ENCODE measurements at regions of chr18 and their contacts with region 1.

Region 1: GRCh38 chr18:77124452-77124922 is 8.1 kb downstream of the MBP start:
- DNase-seq: peak; percentile 86
- ATAC-seq: peak; percentile 85
- H3K4me3 Mint-ChIP-seq: peak overlapping the region; percentile 69
- H3K27ac Mint-ChIP-seq: peak overlapping the region; percentile 79
- H3K4me1 Mint-ChIP-seq: peaks cover 86% of the 10 kb centered on the region
- H3K27me3 Mint-ChIP-seq: no peaks in the 10 kb centered on the region

Region 2: DNA sequence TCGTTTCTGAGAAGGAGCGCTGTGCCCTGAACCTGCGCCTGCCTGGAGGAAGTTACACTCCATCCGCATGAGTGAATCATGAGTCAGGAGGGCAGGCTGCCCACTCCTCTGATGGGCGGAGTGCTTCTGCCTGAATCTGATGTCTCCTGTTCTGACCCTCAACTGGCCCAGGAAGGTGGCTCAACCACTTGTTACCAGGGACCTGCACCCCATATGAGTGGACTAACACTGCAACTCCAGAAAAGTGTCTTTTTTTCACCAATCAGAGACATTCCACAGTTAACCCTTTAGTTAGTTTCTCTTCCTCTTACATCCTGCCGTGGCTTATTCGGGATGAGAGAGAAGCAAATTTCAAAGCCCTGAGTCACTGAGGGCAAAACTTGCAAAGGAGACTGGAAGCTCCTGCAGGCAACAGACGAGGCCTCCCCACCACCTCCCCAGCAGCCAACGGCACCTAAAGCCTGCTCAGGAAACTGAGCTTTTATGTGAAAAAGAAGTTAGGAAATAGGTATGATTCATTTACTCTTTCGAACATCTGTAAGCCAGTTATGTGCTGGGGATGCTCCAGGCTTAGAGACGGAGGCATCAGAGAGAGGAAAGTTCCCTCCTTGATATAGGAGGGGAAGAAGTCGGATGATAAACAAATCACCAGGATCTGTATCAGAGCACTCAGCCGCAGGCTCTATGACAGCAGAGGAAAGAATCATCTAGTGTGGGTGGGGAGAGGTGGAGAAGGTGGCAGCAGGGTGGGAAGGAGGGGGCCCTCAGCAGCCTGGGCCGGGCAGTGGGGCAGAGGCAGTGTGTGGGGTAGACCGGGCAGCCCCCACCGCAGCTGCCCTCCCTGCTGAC is 22.9 kb before region 1 on chr18:
- CTCF ChIA-PET with region 1: interaction called, 12 read pairs
- DNase-seq: peak; percentile 74
- ATAC-seq: peak; percentile 45
- H3K4me3 Mint-ChIP-seq: peak overlapping the region; percentile 70
- H3K27ac Mint-ChIP-seq: peak overlapping the region; percentile 98
- H3K4me1 Mint-ChIP-seq: peaks cover 95% of the 10 kb centered on the region
- H3K27me3 Mint-ChIP-seq: no peaks in the 10 kb centered on the region

Region 3: DNA sequence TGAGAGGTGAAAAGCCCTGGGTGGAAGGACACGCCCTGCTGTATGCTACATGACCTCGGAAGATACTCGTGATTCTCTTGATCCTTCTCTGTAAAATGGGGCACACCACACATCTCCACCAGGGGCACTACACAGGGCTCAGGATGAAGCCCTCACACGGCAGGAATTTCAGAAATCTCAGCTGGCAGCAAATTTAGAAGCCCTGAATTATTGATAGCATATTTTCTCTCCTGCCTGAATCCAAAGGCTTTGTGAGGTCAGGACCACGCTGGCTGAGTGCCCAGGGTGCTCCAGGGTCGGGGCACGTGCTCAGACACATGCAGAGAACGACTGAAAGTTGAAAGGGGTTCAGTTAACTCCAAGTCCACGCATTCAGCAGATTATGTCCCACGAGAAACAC is 83.1 kb after region 1 on chr18:
- CTCF ChIA-PET with region 1: interaction called, 12 read pairs
- DNase-seq: peak; percentile 56
- ATAC-seq: peak; percentile 50
- H3K4me3 Mint-ChIP-seq: no peak overlapping the region
- H3K27ac Mint-ChIP-seq: no peak overlapping the region
- H3K4me1 Mint-ChIP-seq: peaks cover 47% of the 10 kb centered on the region
- H3K27me3 Mint-ChIP-seq: no peaks in the 10 kb centered on the region

Measured in activated CD8-positive, alpha-beta memory T cell treated with anti-CD3 and anti-CD28 coated beads, Interleukin-2, amount 10 ng/mL, durations not matched to agents 7 days and 5 days (primary cell).